Mammary epithelial cell (primary cell): ENCODE measurements at regions of chr3 and their contacts with region 1.

Region 1: GRCh38 chr3:40337136-40338108 is 27.9 kb downstream of the EIF1B start:
- DNase-seq: peak; percentile 54
- H3K4me3 ChIP-seq: no peak overlapping the region
- H3K27ac ChIP-seq: no peak overlapping the region
- H3K4me1 ChIP-seq: no peaks in the 10 kb centered on the region
- H3K27me3 ChIP-seq: no peaks in the 10 kb centered on the region
- CTCF ChIP-seq: no peak

Region 2: DNA sequence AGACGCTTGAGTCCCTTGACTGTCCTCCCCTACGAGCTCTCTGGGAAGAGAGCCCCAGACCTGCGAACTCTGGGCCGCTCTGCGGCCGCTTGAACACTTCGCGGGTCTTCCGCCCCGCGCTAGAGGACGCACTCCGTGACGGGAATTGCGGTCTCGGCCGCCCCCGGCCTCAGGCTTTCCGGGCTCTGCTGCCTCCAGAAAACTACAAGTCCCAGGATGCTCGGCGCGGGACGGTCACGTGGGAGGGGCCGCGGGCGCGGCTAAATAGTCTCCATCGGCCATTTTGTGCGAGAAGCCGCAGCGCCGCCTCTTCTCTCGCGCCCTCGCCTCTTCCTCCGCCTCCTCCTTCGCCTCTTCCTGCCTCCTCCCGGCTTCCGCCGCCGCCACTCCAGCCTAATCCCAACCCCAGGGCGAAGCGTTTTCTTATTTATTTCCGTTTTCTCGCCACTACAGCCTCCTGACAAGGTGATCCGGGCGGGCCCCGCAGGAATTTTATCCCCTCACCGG is 28.0 kb before region 1 on chr3 and contains the start of gene EIF1B:
- CTCF ChIA-PET with region 1: no interaction called
- dilution Hi-C with region 1: no loop called
- in situ Hi-C with region 1: no loop called
- intact Hi-C with region 1: no loop called
- DNase-seq: peak; percentile 96
- H3K4me3 ChIP-seq: peak within 1 kb of the TSS; percentile 70 to 100 (median 90)
- H3K27ac ChIP-seq: peak within 1 kb of the TSS; percentile 85
- H3K4me1 ChIP-seq: peaks cover 7% of the 10 kb centered on the region
- H3K27me3 ChIP-seq: no peaks in the 10 kb centered on the region
- CTCF ChIP-seq: peak; percentile 55 to 93
- total RNA-seq, gene EIF1B: 11.5 to 43.0 TPM

Region 3: DNA sequence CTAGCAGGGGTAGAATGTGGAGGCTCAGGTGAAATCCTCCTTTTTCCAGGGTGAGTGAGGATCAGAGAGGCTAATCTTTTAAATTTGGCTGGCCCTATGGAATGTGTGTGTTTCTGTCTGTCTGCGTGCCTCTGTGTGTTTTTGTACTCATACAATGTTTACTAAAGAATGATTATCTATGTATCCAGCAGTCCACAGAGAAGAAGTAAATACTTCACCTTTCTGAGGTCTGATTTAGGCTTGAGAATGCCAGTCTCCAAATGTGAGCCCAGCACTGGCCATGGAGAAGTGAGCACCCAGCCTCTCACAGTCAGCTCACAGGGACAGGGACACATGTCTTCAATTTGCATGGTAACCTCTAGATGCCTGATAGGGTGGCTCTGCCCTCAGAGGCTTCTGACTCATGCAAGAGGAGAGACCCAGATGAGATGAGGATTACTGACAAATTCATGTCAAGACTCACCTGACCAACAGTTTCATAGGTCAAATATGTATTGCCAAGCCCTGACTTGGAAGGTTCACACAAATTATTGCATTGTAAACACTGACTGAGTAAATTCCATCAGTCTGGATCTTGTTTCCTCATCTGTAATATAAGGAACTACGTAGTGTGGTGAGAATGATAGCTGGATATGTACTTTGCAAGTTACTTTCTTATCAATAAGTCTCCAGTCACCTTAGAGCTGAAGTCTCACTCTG is 80.6 kb after region 1 on chr3:
- CTCF ChIA-PET with region 1: no interaction called
- dilution Hi-C with region 1: no loop called
- in situ Hi-C with region 1: no loop called
- intact Hi-C with region 1: loop called (anchors 1 kb)
- DNase-seq: peak; percentile 92
- H3K4me3 ChIP-seq: no peak overlapping the region
- H3K27ac ChIP-seq: peak overlapping the region; percentile 27
- H3K4me1 ChIP-seq: peaks cover 5% of the 10 kb centered on the region
- H3K27me3 ChIP-seq: no peaks in the 10 kb centered on the region
- CTCF ChIP-seq: no peak

Region 4: GRCh38 chr3:40432793-40433192 is 95.4 kb after region 1 on chr3:
- CTCF ChIA-PET with region 1: interaction called, 5 read pairs
- dilution Hi-C with region 1: no loop called
- in situ Hi-C with region 1: loop called in 1 of 2 experiments (anchors 10 kb)
- intact Hi-C with region 1: no loop called
- DNase-seq: peak; percentile 6
- H3K4me3 ChIP-seq: no peak overlapping the region
- H3K27ac ChIP-seq: no peak overlapping the region
- H3K4me1 ChIP-seq: no peaks in the 10 kb centered on the region
- H3K27me3 ChIP-seq: peaks cover 2% of the 10 kb centered on the region
- CTCF ChIP-seq: peak in 1 of 2 donors; percentile 35

Region 5: DNA sequence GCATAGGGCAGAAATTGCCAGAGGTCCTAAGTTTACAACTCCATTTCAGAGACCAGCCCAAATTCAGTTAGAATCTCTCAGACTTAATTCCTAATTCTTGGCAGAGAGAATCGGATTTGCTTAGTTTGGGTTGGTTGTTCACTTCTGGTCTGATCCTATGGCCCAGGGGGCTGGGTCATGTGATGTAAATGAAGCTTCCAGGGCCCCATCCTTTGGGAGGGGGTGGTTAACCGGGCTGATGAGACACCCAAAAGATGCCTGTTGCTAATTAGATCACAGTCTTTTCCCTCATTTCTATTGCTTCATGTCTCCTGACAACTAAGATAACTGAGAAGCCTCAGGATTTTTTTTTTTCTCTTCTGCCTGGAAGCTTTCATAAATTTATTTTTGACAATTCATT is 157.3 kb after region 1 on chr3:
- CTCF ChIA-PET with region 1: interaction called, 12 read pairs
- dilution Hi-C with region 1: no loop called
- in situ Hi-C with region 1: no loop called
- intact Hi-C with region 1: no loop called
- DNase-seq: no peak
- H3K4me3 ChIP-seq: no peak overlapping the region
- H3K27ac ChIP-seq: no peak overlapping the region
- H3K4me1 ChIP-seq: no peaks in the 10 kb centered on the region
- H3K27me3 ChIP-seq: no peaks in the 10 kb centered on the region
- CTCF ChIP-seq: no peak

Region 6: GRCh38 chr3:40524568-40525285 is 187.3 kb after region 1 on chr3 and contains the start of gene ZNF621:
- CTCF ChIA-PET with region 1: no interaction called
- dilution Hi-C with region 1: no loop called
- in situ Hi-C with region 1: loop called in 1 of 2 experiments (anchors 25 kb)
- intact Hi-C with region 1: no loop called
- DNase-seq: peak; percentile 84
- H3K4me3 ChIP-seq: peak within 1 kb of the TSS; percentile 76 to 84 (median 78)
- H3K27ac ChIP-seq: peak within 1 kb of the TSS; percentile 84
- H3K4me1 ChIP-seq: peaks cover 13% of the 10 kb centered on the region
- H3K27me3 ChIP-seq: no peaks in the 10 kb centered on the region
- CTCF ChIP-seq: no peak
- total RNA-seq, gene ZNF621: 20.0 to 32.4 TPM

Region 7: DNA sequence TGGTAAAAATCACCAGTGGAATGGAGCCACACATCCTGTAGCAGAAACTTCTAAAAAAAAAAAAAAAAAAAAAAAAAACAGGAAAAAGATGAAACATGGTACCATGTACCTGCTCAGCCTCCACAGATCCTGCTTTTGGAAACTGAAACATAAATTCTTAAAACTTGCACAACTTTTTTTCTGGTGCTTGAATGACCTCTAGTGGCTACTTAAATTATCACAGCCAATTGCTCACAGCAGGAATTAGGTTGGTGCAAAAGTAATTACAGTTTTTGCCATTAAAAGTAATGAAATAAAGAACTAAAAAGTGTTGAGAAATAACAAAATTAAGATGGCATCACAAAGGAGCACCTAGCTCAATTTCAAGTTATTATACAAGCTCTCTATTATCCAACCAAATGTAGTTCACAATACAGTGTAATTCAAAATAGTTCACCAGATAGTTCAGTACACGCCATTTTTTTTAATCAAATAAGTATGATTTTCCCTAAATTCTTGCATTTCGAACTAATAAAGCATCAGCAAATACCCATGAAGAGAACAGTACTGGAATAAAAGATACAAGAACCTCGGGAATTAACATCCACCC is 1543.9 kb after region 1 on chr3:
- CTCF ChIA-PET with region 1: no interaction called
- dilution Hi-C with region 1: no loop called
- in situ Hi-C with region 1: loop called in 1 of 2 experiments (anchors 25 kb)
- intact Hi-C with region 1: no loop called
- DNase-seq: peak; percentile 29
- H3K4me3 ChIP-seq: no peak overlapping the region
- H3K27ac ChIP-seq: no peak overlapping the region
- H3K4me1 ChIP-seq: no peaks in the 10 kb centered on the region
- H3K27me3 ChIP-seq: no peaks in the 10 kb centered on the region
- CTCF ChIP-seq: peak; percentile 54 to 55